ENCODE measurements at regions of chr6 and their contacts with region 1.

Region 1: DNA sequence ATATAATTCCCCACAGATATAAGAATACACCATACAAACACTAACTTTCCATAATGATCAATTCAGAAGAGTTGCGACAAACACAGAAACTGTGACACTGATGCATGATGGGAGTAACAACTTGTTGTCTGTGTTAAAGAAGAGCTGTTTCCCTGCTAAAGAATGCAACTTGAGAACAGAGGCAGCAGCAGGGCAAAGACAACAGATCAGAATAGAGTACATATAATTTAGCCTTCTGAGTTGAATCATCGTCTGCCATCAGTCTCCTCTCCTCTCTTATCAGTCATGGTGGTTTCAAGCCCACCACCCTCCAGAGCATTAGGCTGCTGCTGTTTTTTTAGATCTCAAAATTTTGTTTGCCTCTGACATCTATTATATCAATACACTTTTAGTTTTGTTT is 280.4 kb downstream of the UBE3D start:
- DNase-seq: no peak
- H3K4me3 ChIP-seq: no peak overlapping the region
- H3K27ac ChIP-seq: no peak overlapping the region
- H3K4me1 ChIP-seq: no peaks in the 10 kb centered on the region
- H3K27me3 ChIP-seq: no peaks in the 10 kb centered on the region
- CTCF ChIP-seq: no peak

Region 2: DNA sequence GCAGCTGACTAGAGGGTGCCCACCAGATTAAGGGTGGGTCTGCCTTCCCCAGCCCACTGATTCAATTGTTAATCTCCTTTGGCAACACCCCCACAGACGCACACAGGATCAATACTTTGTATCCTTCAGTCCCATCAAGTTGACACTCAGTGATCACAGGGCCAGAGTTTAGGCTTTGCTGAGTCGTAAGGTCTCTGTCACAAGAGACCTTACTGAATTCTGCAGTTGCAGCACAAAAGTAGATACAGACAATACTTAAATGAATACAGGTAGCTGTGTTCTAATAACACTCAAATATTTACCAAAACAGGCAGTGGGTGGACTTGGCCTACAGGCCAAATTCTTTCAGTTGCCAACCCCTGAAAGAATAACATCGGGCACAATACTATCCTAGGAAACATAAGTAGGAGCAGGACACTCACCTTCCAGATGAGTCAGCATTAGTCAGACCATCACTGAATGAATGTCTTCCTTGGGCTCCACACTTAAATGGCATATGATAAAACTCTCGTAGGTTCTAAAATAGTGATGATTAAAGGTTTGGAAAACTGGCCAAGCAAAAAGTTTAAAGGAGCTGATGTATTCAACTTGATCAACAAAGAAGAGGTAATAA is 90.5 kb after region 1 on chr6:
- CTCF ChIA-PET with region 1: no interaction called
- POLR2A ChIA-PET with region 1: no interaction called
- intact Hi-C with region 1: no loop called
- DNase-seq: peak; percentile 56 to 84
- H3K4me3 ChIP-seq: no peak overlapping the region
- H3K27ac ChIP-seq: peak overlapping the region; percentile 43
- H3K4me1 ChIP-seq: peaks cover 23% of the 10 kb centered on the region
- H3K27me3 ChIP-seq: no peaks in the 10 kb centered on the region
- CTCF ChIP-seq: no peak

Region 3: GRCh38 chr6:83199863-83200225 is 414.6 kb after region 1 on chr6:
- CTCF ChIA-PET with region 1: no interaction called
- POLR2A ChIA-PET with region 1: interaction called, 12 read pairs
- intact Hi-C with region 1: no loop called
- DNase-seq: peak; percentile 24 to 58
- H3K4me3 ChIP-seq: no peak overlapping the region
- H3K27ac ChIP-seq: no peak overlapping the region
- H3K4me1 ChIP-seq: no peaks in the 10 kb centered on the region
- H3K27me3 ChIP-seq: no peaks in the 10 kb centered on the region
- CTCF ChIP-seq: no peak